CD4-positive, alpha-beta T cell (primary cell): ENCODE measurements at regions of chr9 and their contacts with region 1.

Region 1: DNA sequence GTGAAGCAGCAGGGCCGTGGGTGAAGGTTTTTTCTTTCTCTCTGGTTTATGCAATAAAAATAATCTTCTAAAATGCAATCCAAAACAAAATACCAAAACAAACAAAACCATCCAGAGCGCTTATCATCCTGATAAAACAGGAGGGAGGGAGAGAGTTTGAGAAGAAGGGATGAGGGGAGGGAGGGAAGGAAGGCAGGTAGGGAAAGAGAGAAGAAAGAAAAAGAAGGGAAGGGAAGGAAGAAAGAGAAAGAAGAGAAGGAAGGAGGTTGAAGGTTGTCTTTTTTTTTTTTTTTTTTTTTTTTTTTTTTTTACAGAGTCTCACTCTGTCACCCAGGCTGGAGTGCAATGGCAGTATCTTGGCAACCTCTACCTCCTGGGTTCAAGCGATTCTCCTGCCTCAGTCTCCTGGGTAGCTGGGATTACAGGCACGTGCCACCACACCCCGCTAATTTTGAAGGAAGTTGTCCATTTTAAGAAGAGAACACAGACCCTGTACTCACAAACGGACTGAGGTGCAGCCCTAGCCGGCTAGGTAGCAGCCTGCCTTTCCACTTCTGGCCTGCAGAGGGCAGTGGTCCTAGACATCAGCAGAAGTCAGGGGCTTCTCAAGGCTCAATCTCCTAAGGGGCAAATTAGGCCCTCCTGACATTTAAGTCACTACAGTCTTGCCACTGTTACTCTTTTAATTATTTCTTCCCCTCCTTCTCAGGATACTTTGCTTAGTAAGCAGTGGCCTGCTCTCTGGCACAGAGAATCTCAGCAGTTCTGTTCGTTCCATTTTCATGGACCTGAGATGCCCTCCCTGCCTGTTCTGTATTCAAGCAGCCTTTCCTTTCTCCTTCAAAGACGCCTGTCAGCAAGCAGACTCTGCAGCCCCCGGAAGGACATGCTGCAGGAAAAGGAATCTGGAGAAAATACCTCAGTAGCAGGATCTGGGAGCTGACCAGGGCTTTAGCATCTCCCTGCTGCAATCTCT is 76.4 kb downstream of the EPB41L4B start:
- DNase-seq: peak; percentile 32 to 77 (median 54)
- ATAC-seq: peak; percentile 79
- H3K4me3 ChIP-seq: no peak overlapping the region
- H3K4me3 Mint-ChIP-seq: no peak overlapping the region
- H3K27ac ChIP-seq: no peak overlapping the region
- H3K27ac Mint-ChIP-seq: no peak overlapping the region
- H3K4me1 ChIP-seq: no peaks in the 10 kb centered on the region
- H3K4me1 Mint-ChIP-seq: no peaks in the 10 kb centered on the region
- H3K27me3 ChIP-seq: peaks cover 5 to 8% of the 10 kb centered on the region in 2 experiments
- H3K27me3 Mint-ChIP-seq: peaks cover 35% of the 10 kb centered on the region
- CTCF ChIP-seq: peak; percentile 95

Region 2: GRCh38 chr9:109320742-109321448 is 76.5 kb after region 1 on chr9 and contains the start of gene EPB41L4B:
- CTCF ChIA-PET with region 1: no interaction called
- POLR2A ChIA-PET with region 1: no interaction called
- intact Hi-C with region 1: loop called (anchors 1 to 2 kb)
- DNase-seq: peak; percentile 77 to 89 (median 82)
- ATAC-seq: peak; percentile 98
- H3K4me3 ChIP-seq: no peak within 1 kb of the TSS
- H3K4me3 Mint-ChIP-seq: peak within 1 kb of the TSS; percentile 86
- H3K27ac ChIP-seq: no peak within 1 kb of the TSS
- H3K27ac Mint-ChIP-seq: no peak within 1 kb of the TSS
- H3K4me1 ChIP-seq: peaks cover 12% of the 10 kb centered on the region
- H3K4me1 Mint-ChIP-seq: peaks cover 15% of the 10 kb centered on the region
- H3K27me3 ChIP-seq: peaks cover 42 to 49% of the 10 kb centered on the region in 2 experiments
- H3K27me3 Mint-ChIP-seq: peaks cover 73% of the 10 kb centered on the region
- CTCF ChIP-seq: peak; percentile 73
- total RNA-seq, gene EPB41L4B: not detected

Region 3: DNA sequence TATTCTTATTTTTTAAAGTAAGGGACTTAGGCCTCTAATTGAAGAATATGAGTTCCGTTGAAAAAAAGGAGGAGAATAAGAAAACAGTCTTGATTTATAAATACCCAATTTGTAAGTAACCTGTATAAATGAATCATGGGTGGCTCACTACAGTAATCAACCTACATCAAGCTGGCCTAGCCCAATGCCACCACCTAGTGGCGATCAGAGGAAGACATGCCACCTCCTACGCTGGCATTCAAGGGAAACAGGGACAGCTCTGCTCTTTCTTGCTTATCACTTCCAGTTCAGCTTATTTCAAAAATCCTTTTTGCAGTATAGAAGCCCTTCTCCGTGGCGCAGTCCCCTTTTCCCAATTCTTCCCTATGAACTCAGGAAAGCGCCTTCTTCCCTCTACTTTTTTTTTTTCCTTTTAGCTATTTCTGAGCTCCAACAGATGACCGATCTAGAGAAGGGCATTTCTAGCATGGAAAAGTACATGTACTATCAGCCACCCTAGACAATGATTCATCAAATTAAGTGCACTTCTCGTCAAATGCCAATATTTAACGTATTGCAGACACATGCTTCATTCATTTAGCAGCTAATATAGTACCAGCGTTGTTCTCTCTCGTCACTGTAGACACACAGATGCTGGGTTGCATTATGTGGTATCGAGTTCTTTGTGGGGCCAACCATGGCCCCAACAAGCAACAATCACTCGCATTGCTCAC is 225.4 kb after region 1 on chr9:
- CTCF ChIA-PET with region 1: no interaction called
- POLR2A ChIA-PET with region 1: no interaction called
- intact Hi-C with region 1: loop called (anchors 2 kb)
- DNase-seq: peak; percentile 20 to 67 (median 32)
- ATAC-seq: peak; percentile 66
- H3K4me3 ChIP-seq: no peak overlapping the region
- H3K4me3 Mint-ChIP-seq: no peak overlapping the region
- H3K27ac ChIP-seq: no peak overlapping the region
- H3K27ac Mint-ChIP-seq: no peak overlapping the region
- H3K4me1 ChIP-seq: no peaks in the 10 kb centered on the region
- H3K4me1 Mint-ChIP-seq: no peaks in the 10 kb centered on the region
- H3K27me3 ChIP-seq: peaks cover 4 to 9% of the 10 kb centered on the region in 2 experiments
- H3K27me3 Mint-ChIP-seq: peaks cover 11% of the 10 kb centered on the region
- CTCF ChIP-seq: peak; percentile 87